OCI-LY7 (cell line): ENCODE measurements at regions of chr17 and their contacts with region 1.

Region 1: GRCh38 chr17:1724506-1725362 is at the start of gene WDR81:
- DNase-seq: peak; percentile 93
- H3K4me3 ChIP-seq: peak within 1 kb of the TSS; percentile 92
- H3K27ac ChIP-seq: peak within 1 kb of the TSS; percentile 61
- H3K4me1 ChIP-seq: peaks cover 43% of the 10 kb centered on the region
- CTCF ChIP-seq: no peak
- total RNA-seq, gene WDR81: 12.2 and 19.1 TPM in 2 replicates

Region 2: GRCh38 chr17:1769822-1770477 is 45.2 kb after region 1 on chr17:
- CTCF ChIA-PET with region 1: no interaction called
- POLR2A ChIA-PET with region 1: interaction called, 3 read pairs
- intact Hi-C with region 1: loop called (anchors 5 kb)
- DNase-seq: no peak
- H3K4me3 ChIP-seq: no peak overlapping the region
- H3K27ac ChIP-seq: no peak overlapping the region
- H3K4me1 ChIP-seq: peaks cover 7% of the 10 kb centered on the region
- CTCF ChIP-seq: no peak

Region 3: GRCh38 chr17:1829592-1830257 is 105.0 kb after region 1 on chr17 and contains the starts of genes RPA1 and SMYD4:
- CTCF ChIA-PET with region 1: no interaction called
- POLR2A ChIA-PET with region 1: no interaction called
- intact Hi-C with region 1: loop called (anchors 5 kb)
- DNase-seq: peak; percentile 92
- H3K4me3 ChIP-seq: peak within 1 kb of the TSS; percentile 78
- H3K27ac ChIP-seq: peak within 1 kb of the TSS; percentile 70
- H3K4me1 ChIP-seq: peaks cover 45% of the 10 kb centered on the region
- CTCF ChIP-seq: no peak
- total RNA-seq, gene RPA1: 55.5 and 90.2 TPM in 2 replicates
- total RNA-seq, gene SMYD4: 21.3 and 27.5 TPM in 2 replicates

Region 4: GRCh38 chr17:1865252-1866037 is 140.7 kb after region 1 on chr17:
- CTCF ChIA-PET with region 1: no interaction called
- POLR2A ChIA-PET with region 1: no interaction called
- intact Hi-C with region 1: loop called (anchors 2 kb)
- DNase-seq: peak; percentile 56
- H3K4me3 ChIP-seq: no peak overlapping the region
- H3K27ac ChIP-seq: no peak overlapping the region
- H3K4me1 ChIP-seq: no peaks in the 10 kb centered on the region
- CTCF ChIP-seq: peak; percentile 89